Psoas muscle (tissue), 8 donors: ENCODE measurements at regions of chr3 and their contacts with region 1.

Region 1: DNA sequence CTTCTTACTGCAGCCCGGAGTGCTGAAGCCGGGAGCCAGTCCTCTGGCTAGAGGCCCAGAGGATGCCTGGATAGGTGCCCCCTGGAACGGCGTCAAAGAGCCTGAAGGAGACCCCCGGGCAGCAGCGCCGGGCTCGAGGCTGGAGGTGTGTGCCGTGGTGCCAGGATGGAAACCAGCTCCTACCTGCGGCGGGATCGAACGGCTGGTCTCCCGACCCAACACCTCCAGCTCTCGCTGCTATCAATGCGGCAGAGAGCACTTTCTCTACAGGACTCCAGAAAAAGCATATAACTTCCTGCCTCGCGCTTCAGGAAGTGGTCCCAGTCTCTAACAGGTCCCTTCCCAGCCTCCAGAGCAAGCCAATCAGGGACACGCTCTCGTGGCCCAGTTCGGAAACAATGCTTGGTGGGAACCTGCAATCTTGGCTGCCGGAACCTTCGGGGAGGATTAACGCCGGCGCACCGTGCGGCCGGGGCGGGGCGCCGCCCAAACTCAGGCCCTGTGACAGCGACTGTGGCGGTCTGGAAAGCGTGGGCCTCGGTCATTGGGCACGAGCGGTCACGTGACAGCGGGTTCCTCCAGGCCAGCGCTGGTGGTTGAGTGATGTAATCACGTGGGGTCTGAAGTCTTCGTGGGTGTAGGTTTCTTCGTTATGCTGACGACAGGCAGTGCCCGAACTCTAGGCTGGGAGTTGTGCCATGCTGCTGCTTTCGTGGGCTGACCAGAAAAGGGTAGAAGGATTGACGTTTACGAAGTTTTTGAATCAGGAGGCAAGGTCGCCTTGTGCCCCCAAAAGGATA is at the start of gene SLC33A1:
- DNase-seq: peak; percentile 99 to 100
- ATAC-seq: peak; percentile 95 to 98 (median 98)
- H3K4me3 ChIP-seq: peak within 1 kb of the TSS; percentile 84
- H3K27ac ChIP-seq: peak within 1 kb of the TSS; percentile 97
- H3K4me1 ChIP-seq: peaks cover 32% of the 10 kb centered on the region
- H3K27me3 ChIP-seq: no peaks in the 10 kb centered on the region
- CTCF ChIP-seq: no peak
- total RNA-seq, gene SLC33A1: 7.1 to 10.2 (median 8.5) TPM

Region 2: GRCh38 chr3:155605571-155605970 is 248.8 kb before region 1 on chr3:
- intact Hi-C with region 1: no loop called
- DNase-seq: no peak
- ATAC-seq: no peak
- H3K4me3 ChIP-seq: no peak overlapping the region
- H3K27ac ChIP-seq: no peak overlapping the region
- H3K4me1 ChIP-seq: no peaks in the 10 kb centered on the region
- H3K27me3 ChIP-seq: no peaks in the 10 kb centered on the region
- CTCF ChIP-seq: no peak

Region 3: DNA sequence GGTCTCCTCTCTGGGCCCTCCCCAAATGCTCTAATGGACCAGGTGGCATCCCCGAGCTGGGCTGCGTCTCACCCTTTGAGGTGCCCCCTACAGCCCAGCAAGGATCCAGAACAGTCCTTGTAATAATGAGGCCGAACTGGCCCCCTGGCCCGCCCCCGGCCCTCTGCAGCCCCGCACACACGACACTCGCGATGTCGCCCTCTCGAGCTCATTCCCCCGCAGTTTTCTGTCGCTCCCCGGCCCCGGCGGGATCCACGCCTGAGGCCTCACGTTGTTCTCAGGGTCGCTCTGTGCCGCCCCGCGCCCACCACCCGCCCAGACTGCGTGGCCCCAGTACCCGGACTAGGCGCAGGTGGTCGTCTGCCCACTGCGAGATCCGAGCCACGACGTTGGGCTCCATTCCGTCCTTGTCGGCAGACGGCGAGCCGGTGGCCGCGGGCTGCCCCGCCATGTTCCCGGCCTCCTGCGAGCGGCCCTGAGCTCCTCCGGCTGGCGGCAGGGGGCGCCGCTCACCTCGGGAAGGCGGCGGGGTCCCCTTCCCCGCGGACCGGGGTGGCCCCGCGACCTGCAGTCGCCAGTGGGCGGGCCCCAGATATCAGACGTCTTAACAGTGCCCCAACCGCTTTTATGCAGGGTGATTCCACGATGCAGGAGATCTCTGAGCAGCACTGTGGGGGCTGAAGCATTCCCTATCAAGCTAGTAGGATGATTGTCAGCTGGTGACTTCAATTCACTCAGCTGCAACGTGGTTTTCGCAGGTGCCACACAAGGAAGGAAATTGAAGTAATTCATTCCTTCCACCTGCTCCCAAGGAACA is 48.3 kb before region 1 on chr3 and contains the start of gene C3orf33:
- intact Hi-C with region 1: loop called in 1 of 2 experiments (anchors 5 kb)
- DNase-seq: peak; percentile 73 to 83
- ATAC-seq: peak; percentile 93 to 99 (median 96)
- H3K4me3 ChIP-seq: peak within 1 kb of the TSS; percentile 76
- H3K27ac ChIP-seq: peak within 1 kb of the TSS; percentile 84
- H3K4me1 ChIP-seq: no peaks in the 10 kb centered on the region
- H3K27me3 ChIP-seq: no peaks in the 10 kb centered on the region
- CTCF ChIP-seq: peak; percentile 88
- total RNA-seq, gene C3orf33: 2.8 to 5.1 (median 4.5) TPM

Region 4: DNA sequence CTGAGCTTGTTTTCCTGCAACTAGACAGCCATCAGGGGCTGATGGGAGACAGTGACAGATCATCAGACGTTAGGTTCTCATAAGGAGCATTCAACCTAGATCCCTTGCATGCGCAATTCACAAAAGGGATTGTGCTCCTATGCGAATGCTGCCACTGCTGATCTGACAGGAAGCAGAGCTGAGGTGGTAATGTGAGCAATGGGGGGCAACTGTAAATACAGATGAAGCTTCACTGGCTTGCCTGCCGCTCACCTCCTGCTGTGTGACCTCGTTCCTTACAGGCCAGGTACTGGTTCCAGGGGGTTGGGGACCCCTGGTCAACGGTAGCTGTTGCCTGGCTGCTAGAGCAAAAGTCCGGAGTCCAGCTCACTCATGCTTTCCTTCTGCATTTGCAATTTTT is 239.6 kb after region 1 on chr3:
- intact Hi-C with region 1: no loop called
- DNase-seq: no peak
- ATAC-seq: no peak
- H3K4me3 ChIP-seq: no peak overlapping the region
- H3K27ac ChIP-seq: no peak overlapping the region
- H3K4me1 ChIP-seq: no peaks in the 10 kb centered on the region
- H3K27me3 ChIP-seq: no peaks in the 10 kb centered on the region
- CTCF ChIP-seq: no peak